ENCODE measurements at regions of chr16 and their contacts with region 1.

Region 1: GRCh38 chr16:3611146-3611975 is at the start of gene SLX4:
- DNase-seq: peak; percentile 91 to 96 (median 92)
- ATAC-seq: peak; percentile 89 to 98 (median 96)
- H3K4me3 ChIP-seq: peak within 1 kb of the TSS; percentile 60 to 99 (median 87)
- H3K27ac ChIP-seq: peak within 1 kb of the TSS; percentile 64 to 94 (median 86)
- H3K4me1 ChIP-seq: peaks cover 0 to 33% (median 19%) of the 10 kb centered on the region in 12 donors
- H3K27me3 ChIP-seq: no peaks in the 10 kb centered on the region
- CTCF ChIP-seq: peak in 2 of 12 donors; percentile 4 to 24
- POLR2A ChIP-seq: peak; percentile 55 to 92
- total RNA-seq, gene SLX4: 2.0 to 4.7 (median 3.2) TPM

Region 2: DNA sequence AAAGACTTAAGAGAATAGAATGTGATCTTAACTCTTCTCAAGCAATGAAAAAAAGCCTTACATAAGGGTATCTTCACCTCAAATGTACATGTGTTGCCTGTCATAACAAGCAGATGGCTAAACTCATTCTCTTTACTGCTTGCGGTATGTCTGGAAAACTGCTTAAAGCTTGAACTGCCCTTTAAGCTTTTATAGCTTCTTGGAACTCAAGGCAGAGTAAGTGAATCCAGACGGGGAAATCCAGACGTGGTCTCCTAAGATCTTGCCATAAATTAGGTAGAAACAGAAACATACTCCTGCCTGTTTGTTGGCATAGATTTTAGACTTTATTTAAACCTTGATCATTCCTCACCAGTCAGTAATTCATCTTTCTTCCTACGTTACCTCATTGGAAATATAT is 90.9 kb before region 1 on chr16:
- intact Hi-C with region 1: loop called in 2 of 10 experiments (anchors 10 kb)
- DNase-seq: no peak
- ATAC-seq: no peak
- H3K4me3 ChIP-seq: no peak overlapping the region
- H3K27ac ChIP-seq: peak overlapping the region in 1 of 12 donors; percentile 79
- H3K4me1 ChIP-seq: no peaks in the 10 kb centered on the region
- H3K27me3 ChIP-seq: no peaks in the 10 kb centered on the region
- CTCF ChIP-seq: no peak
- POLR2A ChIP-seq: no peak

Region 3: DNA sequence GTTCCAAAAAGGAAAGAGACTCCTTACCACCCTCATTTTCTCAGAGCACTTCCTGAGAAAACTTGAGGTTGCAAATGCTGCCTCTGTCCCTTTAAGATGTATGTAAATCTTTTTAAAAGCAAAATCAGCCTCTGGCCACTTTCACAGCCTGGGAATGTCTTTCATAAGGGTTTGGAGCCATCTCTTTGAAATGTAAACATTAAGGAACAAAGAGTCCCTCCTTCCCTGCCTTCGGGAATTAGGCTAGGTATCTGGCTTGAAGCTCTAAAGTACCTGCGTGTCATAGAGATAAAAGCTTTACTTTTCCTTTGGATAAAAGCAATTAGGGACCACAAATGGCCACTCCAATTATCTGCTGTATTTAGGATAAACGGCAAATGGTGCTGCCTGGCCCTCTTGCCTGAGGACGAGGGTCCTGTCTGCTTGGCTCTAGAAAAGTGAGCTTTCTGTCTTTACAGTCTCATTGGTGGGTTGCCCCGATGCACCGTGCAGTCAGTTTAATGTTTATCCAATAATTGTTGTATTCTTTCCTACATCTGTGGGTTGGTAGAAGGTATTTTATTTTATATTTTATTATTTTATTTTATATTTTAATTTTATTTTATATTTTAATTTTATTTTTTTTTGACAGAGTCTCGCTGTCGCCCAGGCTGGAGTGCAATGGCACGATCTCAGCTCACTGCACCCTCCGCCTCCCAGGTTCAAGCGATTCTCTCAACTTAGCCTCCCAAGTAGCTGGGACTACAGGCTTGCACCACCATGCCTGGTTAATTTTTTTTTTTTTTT is 58.0 kb before region 1 on chr16:
- intact Hi-C with region 1: loop called in 1 of 10 experiments (anchors 10 kb)
- DNase-seq: no peak
- ATAC-seq: no peak
- H3K4me3 ChIP-seq: no peak overlapping the region
- H3K27ac ChIP-seq: no peak overlapping the region
- H3K4me1 ChIP-seq: peaks cover 0 to 6% (median 0%) of the 10 kb centered on the region in 12 donors
- H3K27me3 ChIP-seq: no peaks in the 10 kb centered on the region
- CTCF ChIP-seq: no peak
- POLR2A ChIP-seq: no peak

Region 4: DNA sequence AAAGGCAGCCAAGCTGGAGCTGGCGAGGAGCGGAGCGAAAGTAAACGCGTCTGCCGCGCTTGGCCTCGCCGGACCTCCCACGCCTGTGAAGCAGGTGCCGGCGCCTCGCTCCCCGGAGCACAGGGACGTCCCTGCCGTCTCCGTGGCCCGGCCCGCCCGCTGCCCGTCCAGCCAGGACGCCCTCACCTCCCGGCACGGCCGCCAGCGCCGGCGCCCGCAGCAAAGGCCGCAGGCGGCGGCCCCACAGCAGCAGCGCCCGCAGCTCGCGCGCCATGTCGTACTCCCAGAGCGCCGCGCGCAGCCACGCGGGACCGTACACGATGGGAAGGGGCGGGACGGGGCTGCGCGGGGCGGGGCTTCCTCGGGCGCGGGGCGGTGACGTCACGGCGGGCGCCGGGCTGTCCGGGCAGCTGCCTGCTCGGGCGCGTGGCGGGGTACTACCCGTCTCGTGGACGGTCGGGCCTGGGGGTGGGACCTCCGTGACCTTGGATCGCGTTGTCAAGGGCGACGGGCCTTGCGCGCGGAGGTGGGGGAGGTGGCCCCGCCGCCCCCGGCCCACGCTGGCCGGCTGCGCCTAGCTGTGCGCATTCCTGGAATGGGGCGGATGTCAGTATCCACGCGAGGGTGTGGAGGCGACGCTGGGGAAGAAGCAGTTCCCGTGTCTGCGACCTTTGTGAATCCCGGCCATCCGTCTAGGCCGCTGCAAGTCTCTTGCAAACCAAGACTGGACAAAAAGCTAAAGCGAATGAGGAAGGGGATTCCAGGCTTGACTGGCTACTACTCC is 106.1 kb after region 1 on chr16 and contains the start of gene TRAP1:
- intact Hi-C with region 1: no loop called
- DNase-seq: peak; percentile 90 to 94 (median 93)
- ATAC-seq: peak; percentile 86 to 98 (median 97)
- H3K4me3 ChIP-seq: peak within 1 kb of the TSS; percentile 63 to 98 (median 92)
- H3K27ac ChIP-seq: peak within 1 kb of the TSS; percentile 76 to 98 (median 94)
- H3K4me1 ChIP-seq: peaks cover 0 to 22% (median 10%) of the 10 kb centered on the region in 12 donors
- H3K27me3 ChIP-seq: no peaks in the 10 kb centered on the region
- CTCF ChIP-seq: no peak
- POLR2A ChIP-seq: peak; percentile 45 to 96
- total RNA-seq, gene TRAP1: 93.9 to 142 (median 121) TPM